Activated CD4-positive, alpha-beta memory T cell treated with anti-CD3 and anti-CD28 coated beads for 36 hours (primary cell): ENCODE measurements at regions of chr10 and their contacts with region 1.

Region 1: DNA sequence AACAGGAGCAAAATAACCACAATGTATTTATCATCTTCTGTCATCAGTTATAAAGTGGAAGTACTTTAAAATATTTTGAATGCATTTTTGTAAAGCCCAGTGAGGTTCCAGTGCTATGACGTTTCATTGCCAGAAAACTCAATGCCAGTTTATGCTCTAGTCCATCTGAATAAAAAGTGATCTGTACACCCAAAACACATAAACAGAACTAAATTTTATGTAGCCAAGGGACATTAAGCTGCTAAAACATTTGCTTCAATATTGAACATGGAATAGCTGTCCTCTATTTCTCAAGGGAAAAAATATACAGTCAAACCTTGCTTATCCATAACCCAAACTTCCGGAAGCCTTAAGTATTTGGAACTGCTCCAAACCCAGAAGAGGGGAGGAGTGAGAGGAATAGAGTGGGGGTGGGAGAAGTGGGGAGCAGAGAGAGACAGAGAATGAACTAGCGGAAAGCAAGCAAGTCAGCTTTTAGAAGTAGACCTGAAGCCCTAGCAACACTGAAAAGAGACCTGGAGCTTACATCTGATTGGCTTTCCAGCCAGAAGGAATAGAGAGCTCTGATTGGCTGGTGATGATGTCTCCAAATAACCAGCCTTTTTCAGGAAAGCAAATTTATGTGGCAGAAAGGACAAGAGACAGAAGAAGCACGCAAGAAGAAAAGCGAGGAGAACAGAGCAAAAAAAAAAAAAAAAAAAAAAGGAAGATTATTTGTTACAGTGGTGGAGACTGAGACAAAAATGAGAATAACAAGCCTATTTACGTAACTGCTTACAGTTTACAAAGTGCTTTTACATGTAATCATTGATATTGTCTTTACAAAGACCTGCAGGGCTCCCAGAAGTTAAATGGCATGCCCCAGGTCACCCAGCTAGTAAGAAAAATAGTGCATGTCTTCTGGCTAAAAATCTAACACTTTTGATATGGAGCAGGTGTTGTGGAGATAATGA is 196.0 kb downstream of the RNLS start:
- DNase-seq: no peak
- H3K4me3 Mint-ChIP-seq: no peak overlapping the region
- H3K27ac Mint-ChIP-seq: peak overlapping the region; percentile 42
- H3K4me1 Mint-ChIP-seq: peaks cover 16% of the 10 kb centered on the region
- H3K27me3 Mint-ChIP-seq: no peaks in the 10 kb centered on the region

Region 2: GRCh38 chr10:87850742-87851205 is 536.3 kb before region 1 on chr10:
- CTCF ChIA-PET with region 1: interaction called, 24 read pairs
- POLR2A ChIA-PET with region 1: interaction called, 5 read pairs
- intact Hi-C with region 1: no loop called
- DNase-seq: peak; percentile 64
- H3K4me3 Mint-ChIP-seq: no peak overlapping the region
- H3K27ac Mint-ChIP-seq: no peak overlapping the region
- H3K4me1 Mint-ChIP-seq: peaks cover 8% of the 10 kb centered on the region
- H3K27me3 Mint-ChIP-seq: no peaks in the 10 kb centered on the region

Region 3: GRCh38 chr10:88114368-88114767 is 272.7 kb before region 1 on chr10:
- CTCF ChIA-PET with region 1: interaction called, 4 read pairs
- POLR2A ChIA-PET with region 1: no interaction called
- intact Hi-C with region 1: loop called (anchors 2 kb)
- DNase-seq: peak; percentile 25
- H3K4me3 Mint-ChIP-seq: no peak overlapping the region
- H3K27ac Mint-ChIP-seq: no peak overlapping the region
- H3K4me1 Mint-ChIP-seq: peaks cover 6% of the 10 kb centered on the region
- H3K27me3 Mint-ChIP-seq: peaks cover 2% of the 10 kb centered on the region

Region 4: DNA sequence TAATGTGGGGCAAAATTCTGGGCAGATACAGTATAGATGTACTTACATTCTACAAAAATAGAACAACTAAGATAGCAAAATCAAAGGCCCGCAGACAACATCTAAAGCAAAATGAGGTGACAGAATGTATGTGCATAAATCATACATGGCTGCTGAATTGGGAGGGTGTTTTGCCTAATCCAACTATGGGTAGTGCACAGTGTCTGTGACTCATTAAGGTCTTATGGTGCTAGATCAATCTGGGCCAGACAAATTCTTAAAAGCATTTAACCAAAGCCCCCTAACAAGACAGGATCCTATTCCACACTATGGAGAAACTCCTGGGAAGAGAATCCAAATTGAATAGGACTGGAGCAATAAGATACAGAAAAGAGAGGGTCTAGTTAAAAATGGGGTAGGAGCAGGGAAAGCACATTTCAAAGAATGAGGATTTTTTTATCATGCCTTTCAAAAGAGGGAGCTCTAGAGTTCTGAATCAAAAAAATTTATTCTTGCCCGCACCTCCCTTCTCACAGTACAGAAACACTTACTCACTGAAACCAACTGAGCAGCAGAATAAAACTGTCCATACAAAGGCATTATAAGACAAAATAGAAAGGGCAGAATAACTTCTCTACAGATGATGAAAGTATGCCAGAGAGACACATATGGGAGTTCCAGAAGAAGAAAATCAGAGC is 14.7 kb after region 1 on chr10:
- CTCF ChIA-PET with region 1: interaction called, 18 read pairs
- POLR2A ChIA-PET with region 1: no interaction called
- intact Hi-C with region 1: no loop called
- DNase-seq: no peak
- H3K4me3 Mint-ChIP-seq: no peak overlapping the region
- H3K27ac Mint-ChIP-seq: no peak overlapping the region
- H3K4me1 Mint-ChIP-seq: peaks cover 6% of the 10 kb centered on the region
- H3K27me3 Mint-ChIP-seq: no peaks in the 10 kb centered on the region

Region 5: DNA sequence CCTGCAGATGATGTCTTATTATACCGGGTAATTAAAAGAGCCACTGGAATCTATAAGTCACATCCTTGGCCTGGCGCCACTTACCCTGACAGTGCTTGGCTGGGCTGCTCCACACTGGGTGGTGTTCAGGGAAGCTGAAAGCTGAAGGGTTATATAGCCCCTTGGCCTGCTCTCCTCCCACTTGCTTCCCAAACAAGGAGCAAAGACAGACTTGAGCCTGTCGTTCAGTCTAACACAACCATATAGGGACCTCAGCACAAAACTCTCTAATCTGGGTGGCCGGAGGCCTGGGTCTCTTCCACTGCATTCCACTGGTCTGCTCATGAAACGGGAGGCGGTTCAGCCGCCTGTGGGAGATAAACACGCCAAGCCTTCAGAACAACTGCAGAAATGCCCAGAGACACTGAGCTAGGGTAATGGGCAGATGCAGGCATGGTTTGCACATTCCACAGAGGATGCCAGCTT is 565.6 kb after region 1 on chr10 and contains the start of gene ACTA2:
- CTCF ChIA-PET with region 1: no interaction called
- POLR2A ChIA-PET with region 1: no interaction called
- intact Hi-C with region 1: no loop called
- DNase-seq: no peak
- H3K4me3 Mint-ChIP-seq: no peak within 1 kb of the TSS
- H3K27ac Mint-ChIP-seq: no peak within 1 kb of the TSS
- H3K4me1 Mint-ChIP-seq: no peaks in the 10 kb centered on the region
- H3K27me3 Mint-ChIP-seq: no peaks in the 10 kb centered on the region
- total RNA-seq, gene ACTA2: 18.6 to 23.3 TPM